ENCODE measurements at regions of chr20 and their contacts with region 1.

Region 1: GRCh38 chr20:17898548-17898994 is 70.0 kb downstream of the SNX5 start:
- DNase-seq: peak; percentile 82 to 87
- H3K4me3 ChIP-seq: no peak overlapping the region
- H3K27ac ChIP-seq: no peak overlapping the region
- H3K4me1 ChIP-seq: peaks cover 0 to 33% (median 17%) of the 10 kb centered on the region in 4 donors
- H3K27me3 ChIP-seq: no peaks in the 10 kb centered on the region
- CTCF ChIP-seq: peak in 6 of 7 experiments; percentile 81 to 97 (median 94)
- EP300 ChIP-seq: no peak
- POLR2A ChIP-seq: no peak

Region 2: GRCh38 chr20:17682103-17682888 is 216.3 kb before region 1 on chr20 and contains the start of gene RRBP1:
- intact Hi-C with region 1: loop called (anchors 5 kb)
- DNase-seq: peak; percentile 99 to 100
- H3K4me3 ChIP-seq: peak within 1 kb of the TSS; percentile 76 to 94 (median 82)
- H3K27ac ChIP-seq: peak within 1 kb of the TSS; percentile 95 to 99 (median 97)
- H3K4me1 ChIP-seq: peaks cover 35 to 60% (median 57%) of the 10 kb centered on the region in 4 donors
- H3K27me3 ChIP-seq: no peaks in the 10 kb centered on the region
- CTCF ChIP-seq: peak in 4 of 7 experiments; percentile 30 to 63 (median 52)
- EP300 ChIP-seq: no peak
- POLR2A ChIP-seq: peak in 2 of 4 donors; percentile 80 to 92
- total RNA-seq, gene RRBP1: 125 to 456 (median 251) TPM

Region 3: GRCh38 chr20:17796091-17796563 is 102.4 kb before region 1 on chr20:
- intact Hi-C with region 1: loop called (anchors 10 kb)
- DNase-seq: peak; percentile 35 to 56
- H3K4me3 ChIP-seq: no peak overlapping the region
- H3K27ac ChIP-seq: peak overlapping the region in 4 of 5 donors; percentile 64 to 72 (median 69)
- H3K4me1 ChIP-seq: peaks cover 10 to 36% (median 25%) of the 10 kb centered on the region in 4 donors
- H3K27me3 ChIP-seq: no peaks in the 10 kb centered on the region
- CTCF ChIP-seq: no peak
- EP300 ChIP-seq: no peak
- POLR2A ChIP-seq: no peak